ENCODE measurements at regions of chr14 and their contacts with region 1.

Region 1: DNA sequence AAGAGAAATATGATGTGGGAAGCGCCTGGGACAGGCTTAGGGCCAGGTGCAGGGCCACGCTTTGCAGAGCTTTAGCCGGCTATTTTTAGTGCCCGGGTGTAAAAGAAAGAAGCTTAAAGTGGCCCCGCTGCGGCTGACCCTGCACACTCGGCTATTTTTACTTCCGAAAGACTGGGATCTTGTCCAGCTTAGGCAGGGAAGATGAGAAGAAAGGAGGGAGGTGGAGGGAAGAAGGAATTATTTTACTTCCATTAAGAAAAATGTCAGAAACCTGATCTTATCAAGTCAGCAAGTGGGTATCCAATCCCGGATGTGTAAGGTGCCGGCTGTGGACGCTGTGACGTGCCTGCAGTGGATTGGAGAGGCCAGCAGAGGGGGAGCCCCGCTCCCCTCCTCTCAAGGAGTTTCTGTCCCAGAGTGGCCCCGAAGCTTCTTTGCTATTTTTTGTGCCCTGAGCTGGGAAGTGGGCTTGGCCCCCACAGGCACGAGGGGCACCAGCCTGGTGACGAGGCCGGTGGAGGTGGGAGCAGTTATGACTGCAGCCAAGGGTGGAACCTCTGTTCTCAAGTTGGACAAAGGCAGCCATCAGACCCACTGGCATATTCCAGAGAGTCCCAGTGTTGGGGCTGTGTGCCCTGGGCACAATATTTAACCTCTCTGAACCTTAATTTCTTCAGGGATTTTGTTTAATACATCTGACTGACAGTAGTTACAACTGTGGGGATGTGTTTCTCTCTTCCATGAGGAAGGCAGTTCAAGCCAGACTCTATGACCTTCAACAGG is 97.7 kb downstream of the ESRRB start:
- DNase-seq: no peak
- H3K4me3 ChIP-seq: no peak overlapping the region
- CTCF ChIP-seq: peak; percentile 5

Region 2: GRCh38 chr14:76424359-76424758 is 49.3 kb before region 1 on chr14:
- in situ Hi-C with region 1: loop called (anchors 5 kb)
- DNase-seq: no peak
- H3K4me3 ChIP-seq: no peak overlapping the region
- CTCF ChIP-seq: no peak

Region 3: DNA sequence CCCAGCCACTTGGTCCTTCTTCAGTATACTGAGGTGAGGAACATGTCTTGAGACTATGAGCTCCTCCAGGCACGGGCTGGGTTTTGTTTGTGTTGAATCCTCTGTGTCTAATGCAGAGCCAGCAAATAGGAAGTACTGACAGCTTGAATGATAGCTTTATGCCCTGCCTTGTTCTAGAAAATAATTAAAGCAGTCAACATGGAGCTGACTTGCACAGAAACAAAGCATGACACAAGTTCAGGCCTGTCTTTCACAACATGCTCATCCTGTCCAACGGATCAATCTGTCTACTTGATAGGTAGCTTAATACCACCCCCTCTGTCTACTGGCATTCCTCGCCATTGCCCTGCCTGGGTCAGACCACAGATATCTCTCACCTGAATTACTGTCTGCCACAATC is 43.2 kb after region 1 on chr14:
- in situ Hi-C with region 1: loop called (anchors 5 kb)
- DNase-seq: no peak
- H3K4me3 ChIP-seq: no peak overlapping the region
- CTCF ChIP-seq: no peak

Region 4: GRCh38 chr14:76531821-76532318 is 58.2 kb after region 1 on chr14:
- in situ Hi-C with region 1: no loop called
- DNase-seq: no peak
- H3K4me3 ChIP-seq: no peak overlapping the region
- CTCF ChIP-seq: no peak

Region 5: GRCh38 chr14:76760331-76761135 is 286.9 kb after region 1 on chr14:
- in situ Hi-C with region 1: no loop called
- DNase-seq: no peak
- H3K4me3 ChIP-seq: peak overlapping the region; percentile 76
- CTCF ChIP-seq: no peak

Measured in astrocyte of the cerebellum (primary cell).